Gastrocnemius medialis (tissue), 4 donors: ENCODE measurements at regions of chr11 and their contacts with region 1.

Region 1: GRCh38 chr11:83285771-83286528 is at the start of gene CCDC90B:
- DNase-seq: peak; percentile 96 to 97
- ATAC-seq: peak; percentile 97 to 98
- H3K4me3 ChIP-seq: peak within 1 kb of the TSS; percentile 80 to 94 (median 90)
- H3K27ac ChIP-seq: peak within 1 kb of the TSS; percentile 95 to 98 (median 97)
- H3K4me1 ChIP-seq: peaks cover 36 to 37% of the 10 kb centered on the region in 2 donors
- H3K27me3 ChIP-seq: no peaks in the 10 kb centered on the region
- CTCF ChIP-seq: peak in 1 of 5 experiments; percentile 7
- POLR2A ChIP-seq: peak; percentile 83 to 88
- total RNA-seq, gene CCDC90B: 18.1 to 30.1 (median 22.8) TPM

Region 2: DNA sequence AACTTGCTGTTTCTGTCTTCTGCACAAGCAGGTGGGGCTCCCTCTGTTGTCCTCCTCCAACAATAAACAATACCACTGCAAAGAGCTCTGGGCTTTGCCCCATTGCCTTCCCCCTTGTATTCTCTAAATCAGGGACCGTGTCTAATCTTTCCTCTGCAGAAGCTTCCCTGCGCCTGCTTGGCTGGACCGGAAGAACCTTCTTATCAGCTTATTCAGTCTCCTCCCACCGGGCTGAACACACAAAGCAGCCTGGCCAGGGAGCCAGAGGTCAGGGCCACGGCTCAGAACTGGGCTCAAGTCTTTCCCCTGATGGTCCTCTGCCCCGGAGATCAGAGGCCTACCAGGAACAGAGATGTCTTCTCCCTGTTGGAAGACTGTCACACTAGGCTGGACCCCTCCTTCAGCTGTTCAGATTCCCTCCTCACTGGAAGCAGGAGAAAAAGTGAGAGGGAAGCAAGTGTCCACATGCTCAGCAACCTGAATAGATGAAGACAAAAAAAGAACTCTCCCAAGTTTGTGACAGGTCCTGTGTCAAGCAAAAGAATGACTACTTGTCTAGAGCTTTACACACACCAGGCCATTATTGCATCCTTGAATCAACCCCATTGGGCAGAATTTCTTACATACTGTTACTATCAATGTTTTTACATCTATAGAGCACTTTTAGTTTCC is 277.9 kb before region 1 on chr11:
- in situ Hi-C with region 1: no loop called
- intact Hi-C with region 1: loop called (anchors 10 kb)
- DNase-seq: no peak
- ATAC-seq: peak in 1 of 2 donors; percentile 22
- H3K4me3 ChIP-seq: no peak overlapping the region
- H3K27ac ChIP-seq: peak overlapping the region; percentile 73 to 81 (median 77)
- H3K4me1 ChIP-seq: peaks cover 81 to 86% of the 10 kb centered on the region in 2 donors
- H3K27me3 ChIP-seq: no peaks in the 10 kb centered on the region
- CTCF ChIP-seq: no peak
- POLR2A ChIP-seq: no peak

Region 3: GRCh38 chr11:83193315-83194280 is 92.4 kb before region 1 on chr11 and contains the start of gene ANKRD42:
- in situ Hi-C with region 1: no loop called
- intact Hi-C with region 1: loop called (anchors 1 kb)
- DNase-seq: peak; percentile 91
- ATAC-seq: peak; percentile 98 to 99
- H3K4me3 ChIP-seq: peak within 1 kb of the TSS; percentile 72 to 87 (median 84)
- H3K27ac ChIP-seq: peak within 1 kb of the TSS; percentile 84 to 95 (median 90)
- H3K4me1 ChIP-seq: peaks cover 18 to 23% of the 10 kb centered on the region in 2 donors
- H3K27me3 ChIP-seq: no peaks in the 10 kb centered on the region
- CTCF ChIP-seq: peak in 1 of 5 experiments; percentile 17
- POLR2A ChIP-seq: peak; percentile 50 to 78
- total RNA-seq, gene ANKRD42: 2.1 to 3.7 (median 3.4) TPM

Region 4: GRCh38 chr11:83751041-83751440 is 465.1 kb after region 1 on chr11:
- in situ Hi-C with region 1: no loop called
- intact Hi-C with region 1: no loop called
- DNase-seq: no peak
- ATAC-seq: no peak
- H3K4me3 ChIP-seq: no peak overlapping the region
- H3K27ac ChIP-seq: no peak overlapping the region
- H3K4me1 ChIP-seq: no peaks in the 10 kb centered on the region
- H3K27me3 ChIP-seq: no peaks in the 10 kb centered on the region
- CTCF ChIP-seq: no peak
- POLR2A ChIP-seq: no peak